A549 (cell line): ENCODE measurements at regions of chr1 and their contacts with region 1.

Region 1: DNA sequence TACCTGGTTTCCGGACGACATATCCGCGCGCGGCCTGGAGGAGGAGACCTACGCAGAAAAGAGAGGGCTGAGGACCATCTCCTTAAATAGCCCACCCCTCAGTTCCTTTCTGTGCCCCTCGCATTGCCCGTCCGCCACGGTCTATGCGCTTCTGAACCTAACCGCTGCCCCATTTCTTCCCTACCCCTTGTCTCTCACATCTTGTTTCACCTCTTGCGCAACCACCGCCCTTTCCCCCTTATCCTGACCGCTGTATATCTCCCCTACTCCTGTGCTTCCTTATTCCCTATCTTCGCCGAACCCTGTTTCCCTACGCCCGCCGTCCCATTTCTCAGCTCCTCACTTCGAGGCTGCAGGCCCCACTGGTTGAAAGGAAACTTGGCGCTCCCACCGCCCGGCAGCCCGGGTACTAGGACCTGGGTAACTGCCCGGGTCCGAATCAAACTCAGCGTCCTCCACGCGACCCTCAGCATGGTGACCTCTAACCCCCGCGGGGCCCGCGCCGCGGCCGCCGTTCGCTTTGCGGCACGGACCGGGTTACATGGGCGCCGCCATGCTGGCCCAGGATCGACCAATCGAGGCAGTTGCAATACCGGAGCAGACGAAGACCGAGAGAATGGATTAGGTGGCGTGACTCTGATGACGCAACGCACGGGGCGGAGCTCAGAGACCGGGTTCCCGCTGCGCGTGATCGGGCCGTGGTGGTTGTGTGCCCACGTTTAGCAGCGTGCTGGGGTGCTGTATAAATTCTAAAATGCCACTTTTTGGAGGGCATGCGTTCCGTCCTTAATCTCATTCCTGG is at the start of gene MRPS15:
- DNase-seq: peak; percentile 69 to 91
- ATAC-seq: peak; percentile 91 to 96
- H3K4me3 ChIP-seq: peak within 1 kb of the TSS; percentile 79
- H3K27ac ChIP-seq: peak within 1 kb of the TSS; percentile 92 to 95
- H3K4me1 ChIP-seq: peaks cover 19% of the 10 kb centered on the region
- CTCF ChIP-seq: no peak
- EP300 ChIP-seq: no peak
- POLR2A ChIP-seq: peak; percentile 83
- RAD21 ChIP-seq: no peak
- polyA plus RNA-seq, gene MRPS15: 67.5 and 79.7 TPM in 2 replicates

Region 2: DNA sequence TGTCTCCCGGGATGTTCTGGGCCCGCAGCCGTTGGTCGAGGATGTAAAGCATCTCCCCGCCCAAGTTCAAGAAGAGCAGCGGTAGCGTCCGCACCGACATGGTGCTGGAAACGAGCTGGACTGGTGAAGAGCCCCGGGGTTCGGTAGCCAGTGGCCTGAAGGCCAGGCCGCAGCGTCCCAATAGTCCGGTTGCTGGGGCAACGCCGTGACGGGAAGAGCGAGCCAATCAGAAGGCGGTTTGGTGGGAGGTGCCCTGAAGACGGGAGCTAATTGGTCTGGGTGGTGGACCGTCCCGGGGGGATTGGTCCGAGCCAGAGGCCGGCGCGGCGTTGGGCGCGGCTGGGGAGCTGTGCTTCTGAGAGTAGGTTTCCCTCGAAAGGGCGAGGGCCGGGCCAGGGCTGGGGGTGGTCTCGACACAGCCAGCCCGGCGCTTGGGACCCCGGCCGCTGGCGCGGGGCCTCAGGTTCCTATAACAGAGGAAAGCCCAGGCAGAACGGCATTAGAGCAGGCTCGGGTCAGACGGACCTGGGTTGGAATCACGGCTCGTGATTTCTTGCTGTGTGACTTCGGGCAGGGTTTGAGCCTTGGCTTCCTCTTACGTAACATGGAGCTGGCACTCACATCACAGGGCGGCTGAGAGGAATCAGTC is 13.6 kb before region 1 on chr1 and contains the start of gene OSCP1:
- CTCF ChIA-PET with region 1: interaction called, 3 read pairs
- POLR2A ChIA-PET with region 1: interaction called, 16 read pairs
- DNase-seq: peak; percentile 94 to 99
- ATAC-seq: peak; percentile 98 to 99
- H3K4me3 ChIP-seq: peak within 1 kb of the TSS; percentile 53
- H3K27ac ChIP-seq: peak within 1 kb of the TSS; percentile 87 to 91
- H3K4me1 ChIP-seq: peaks cover 3% of the 10 kb centered on the region; the same call in 1 of the 3 replicates
- CTCF ChIP-seq: no peak
- EP300 ChIP-seq: no peak
- POLR2A ChIP-seq: peak; percentile 63
- RAD21 ChIP-seq: no peak
- polyA plus RNA-seq, gene OSCP1: 6.6 and 6.8 TPM in 2 replicates

Region 3: DNA sequence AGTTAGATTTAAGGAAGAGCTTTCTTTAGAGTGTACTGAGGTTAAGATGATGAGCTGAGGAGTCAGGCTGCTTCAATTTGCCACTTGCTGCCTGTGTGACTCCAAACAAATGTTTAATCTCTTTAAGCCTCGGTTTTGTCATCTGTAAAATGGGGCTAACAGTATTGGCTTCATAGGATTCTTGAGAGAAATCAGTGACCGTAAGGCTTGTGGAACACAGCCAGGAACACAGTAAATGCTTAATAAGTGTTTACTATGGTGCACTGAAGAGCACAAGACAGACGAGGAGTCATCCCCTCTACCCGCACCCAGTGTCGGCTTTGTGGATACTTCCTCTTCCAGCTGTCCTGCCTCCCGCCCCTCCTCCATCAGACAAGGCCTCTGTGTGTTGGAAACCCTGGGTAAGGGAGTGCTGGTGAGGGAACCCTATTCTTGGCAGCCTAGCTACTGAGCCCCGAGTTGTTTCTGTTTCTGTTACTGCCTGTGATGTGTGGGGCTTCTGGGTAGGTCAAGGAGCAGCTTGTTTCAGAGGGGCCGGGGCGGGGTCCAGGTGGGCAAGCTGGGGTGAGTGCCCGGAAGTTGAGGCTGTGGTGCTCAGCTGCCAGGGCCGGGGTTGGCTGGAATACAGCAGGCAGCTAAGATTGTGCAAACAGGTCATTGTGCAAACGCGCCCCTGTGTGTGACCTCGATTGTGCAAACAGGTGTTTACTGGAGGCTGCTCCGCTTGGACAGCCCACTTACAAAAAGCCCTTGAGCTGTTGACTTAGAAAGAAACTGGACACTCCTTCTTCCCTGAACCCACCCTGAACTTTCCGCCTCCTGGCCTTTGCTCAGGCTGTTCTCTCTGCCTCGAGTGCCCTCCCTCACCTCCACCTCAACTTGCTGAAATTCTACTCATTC is 22.7 kb after region 1 on chr1:
- CTCF ChIA-PET with region 1: no interaction called
- POLR2A ChIA-PET with region 1: interaction called, 12 read pairs
- DNase-seq: peak; percentile 28 to 93
- ATAC-seq: peak; percentile 88 to 89
- H3K4me3 ChIP-seq: no peak overlapping the region
- H3K27ac ChIP-seq: peak overlapping the region; percentile 81 to 84
- H3K4me1 ChIP-seq: peaks cover 21% of the 10 kb centered on the region
- CTCF ChIP-seq: no peak
- EP300 ChIP-seq: peak; percentile 37 to 43; a peak in 2 of 5 replicates
- POLR2A ChIP-seq: no peak
- RAD21 ChIP-seq: no peak